ENCODE measurements at regions of chr18 and their contacts with region 1.

Region 1: GRCh38 chr18:57737400-57738060 is 65.6 kb downstream of the ATP8B1 start:
- DNase-seq: peak; percentile 82 to 90
- H3K4me3 ChIP-seq: no peak overlapping the region
- H3K27ac ChIP-seq: peak overlapping the region; percentile 26 to 58
- H3K4me1 ChIP-seq: peaks cover 0 to 38% (median 10%) of the 10 kb centered on the region in 4 donors
- H3K27me3 ChIP-seq: no peaks in the 10 kb centered on the region
- CTCF ChIP-seq: no peak

Region 2: DNA sequence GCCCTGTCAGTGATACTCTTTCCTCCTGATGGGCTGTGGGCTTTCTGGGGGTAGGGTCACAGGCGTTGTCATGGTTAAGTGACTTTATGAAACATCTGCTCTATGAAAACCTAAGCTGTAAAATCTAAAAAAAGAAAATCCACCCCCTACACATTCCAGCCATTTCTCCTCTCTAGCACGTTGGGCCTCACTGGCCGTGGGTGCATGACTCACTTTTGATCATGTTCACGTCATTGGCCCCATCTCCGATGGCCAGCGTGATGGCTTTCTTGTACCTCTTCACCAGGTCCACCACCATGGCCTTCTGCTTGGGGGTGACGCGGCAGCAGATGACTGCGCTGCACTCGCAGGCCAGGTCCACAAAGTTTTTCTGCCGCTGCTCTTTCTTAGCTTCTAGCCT is 76.6 kb before region 1 on chr18:
- intact Hi-C with region 1: no loop called
- DNase-seq: no peak
- H3K4me3 ChIP-seq: no peak overlapping the region
- H3K27ac ChIP-seq: no peak overlapping the region
- H3K4me1 ChIP-seq: peaks cover 0 to 17% (median 7%) of the 10 kb centered on the region in 4 donors
- H3K27me3 ChIP-seq: no peaks in the 10 kb centered on the region
- CTCF ChIP-seq: no peak

Region 3: GRCh38 chr18:57803103-57803969 is 65.8 kb after region 1 on chr18 and contains the start of gene ATP8B1:
- intact Hi-C with region 1: loop called (anchors 10 kb)
- DNase-seq: peak; percentile 67 to 92
- H3K4me3 ChIP-seq: peak within 1 kb of the TSS; percentile 77 to 97
- H3K27ac ChIP-seq: peak within 1 kb of the TSS; percentile 95 to 97
- H3K4me1 ChIP-seq: peaks cover 0 to 46% (median 27%) of the 10 kb centered on the region in 4 donors
- H3K27me3 ChIP-seq: no peaks in the 10 kb centered on the region
- CTCF ChIP-seq: peak in 1 of 2 experiments; percentile 47

Region 4: DNA sequence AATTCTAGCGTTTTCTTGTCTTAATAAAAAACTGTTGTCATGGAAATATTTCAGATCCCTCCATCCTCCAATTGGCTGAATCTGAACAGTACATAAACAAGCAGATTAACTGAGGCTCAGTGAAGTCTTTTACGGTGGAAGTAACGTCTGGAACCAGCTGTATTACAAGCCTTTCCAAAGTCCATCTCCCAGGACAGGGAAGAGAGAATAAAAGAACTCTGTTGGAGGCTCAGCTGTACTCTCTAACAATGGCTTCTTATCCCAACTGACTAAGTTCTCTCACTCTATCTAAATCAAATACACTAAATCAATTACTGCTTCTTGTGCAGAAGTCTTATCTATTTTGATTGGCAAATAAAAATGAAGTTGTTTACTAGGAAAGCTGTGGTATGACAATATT is 286.6 kb after region 1 on chr18:
- intact Hi-C with region 1: no loop called
- DNase-seq: no peak
- H3K4me3 ChIP-seq: no peak overlapping the region
- H3K27ac ChIP-seq: no peak overlapping the region
- H3K4me1 ChIP-seq: no peaks in the 10 kb centered on the region
- H3K27me3 ChIP-seq: no peaks in the 10 kb centered on the region
- CTCF ChIP-seq: no peak

Measured in tibial artery (tissue), 4 donors.